Activated CD8-positive, alpha-beta T cell treated with anti-CD3 and anti-CD28 coated beads, Interleukin-2, amount 10 ng/mL, durations not matched to agents 7 days and 5 days (primary cell): ENCODE measurements at regions of chr18 and their contacts with region 1.

Region 1: GRCh38 chr18:3665780-3666525 is 216.0 kb downstream of the TGIF1 start:
- DNase-seq: peak; percentile 79
- ATAC-seq: peak; percentile 83
- H3K4me3 Mint-ChIP-seq: peak overlapping the region; percentile 37
- H3K27ac Mint-ChIP-seq: no peak overlapping the region
- H3K4me1 Mint-ChIP-seq: peaks cover 27% of the 10 kb centered on the region
- H3K27me3 Mint-ChIP-seq: peaks cover 8% of the 10 kb centered on the region

Region 2: GRCh38 chr18:3297025-3297984 is 368.6 kb before region 1 on chr18:
- CTCF ChIA-PET with region 1: interaction called, 81 read pairs
- POLR2A ChIA-PET with region 1: interaction called, 3 read pairs
- DNase-seq: peak; percentile 97
- ATAC-seq: peak; percentile 98
- H3K4me3 Mint-ChIP-seq: peak overlapping the region; percentile 89
- H3K27ac Mint-ChIP-seq: peak overlapping the region; percentile 81
- H3K4me1 Mint-ChIP-seq: peaks cover 7% of the 10 kb centered on the region
- H3K27me3 Mint-ChIP-seq: peaks cover 28% of the 10 kb centered on the region

Region 3: DNA sequence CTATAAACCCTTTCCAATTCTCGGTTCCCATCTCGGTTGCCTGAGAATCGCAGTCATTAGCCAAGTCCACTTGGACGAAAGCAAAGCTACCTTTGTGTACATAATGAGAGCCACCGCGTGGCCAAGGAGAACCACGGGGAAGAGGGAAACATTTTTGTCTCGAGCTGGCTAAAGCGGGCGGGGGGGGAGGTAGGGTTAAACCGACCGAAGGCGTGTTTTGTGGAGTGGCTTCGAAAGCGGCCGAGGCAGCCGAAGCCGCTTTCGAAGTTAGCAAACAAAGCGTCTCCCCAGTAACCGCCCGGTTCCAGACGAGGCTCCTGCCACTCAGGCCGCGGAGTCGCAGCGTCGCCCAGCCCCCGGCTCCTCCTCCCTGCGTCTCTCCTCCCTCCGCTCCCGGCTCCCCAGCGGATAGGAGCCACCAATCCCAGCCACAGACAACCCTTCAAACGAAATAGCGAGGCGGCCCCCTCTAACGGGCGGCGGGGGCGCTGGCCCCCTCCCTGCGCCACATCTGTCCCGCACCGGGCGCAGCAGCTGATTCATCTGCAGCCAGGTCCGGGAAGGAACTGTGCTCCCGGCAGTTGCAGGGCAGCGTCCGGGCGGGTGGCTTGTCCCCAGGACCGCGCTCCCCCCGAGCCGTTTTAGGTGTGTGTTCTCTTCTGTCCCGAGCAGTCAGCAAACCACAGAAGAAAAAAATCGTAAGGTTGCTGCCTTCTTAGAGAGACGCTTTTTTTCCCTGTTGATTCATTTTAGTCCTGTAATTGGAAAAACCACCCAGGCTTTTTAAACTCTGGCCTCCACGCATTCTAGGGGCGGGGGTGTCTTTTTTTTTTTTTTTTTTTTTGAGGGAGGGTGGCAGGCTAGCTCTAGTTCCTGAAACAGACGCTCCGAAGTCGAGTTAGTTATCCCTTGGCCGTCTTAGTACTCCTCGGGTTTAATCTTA is 217.8 kb before region 1 on chr18:
- CTCF ChIA-PET with region 1: interaction called, 126 read pairs
- POLR2A ChIA-PET with region 1: interaction called, 7 read pairs
- DNase-seq: peak; percentile 90
- ATAC-seq: peak; percentile 72
- H3K4me3 Mint-ChIP-seq: peak overlapping the region; percentile 95
- H3K27ac Mint-ChIP-seq: peak overlapping the region; percentile 93
- H3K4me1 Mint-ChIP-seq: peaks cover 25% of the 10 kb centered on the region
- H3K27me3 Mint-ChIP-seq: peaks cover under 1% of the 10 kb centered on the region

Region 4: GRCh38 chr18:3593904-3594661 is 71.9 kb before region 1 on chr18:
- CTCF ChIA-PET with region 1: interaction called, 124 read pairs
- POLR2A ChIA-PET with region 1: interaction called, 16 read pairs
- DNase-seq: peak; percentile 92
- ATAC-seq: peak; percentile 92
- H3K4me3 Mint-ChIP-seq: peak overlapping the region; percentile 93
- H3K27ac Mint-ChIP-seq: peak overlapping the region; percentile 98
- H3K4me1 Mint-ChIP-seq: peaks cover 54% of the 10 kb centered on the region
- H3K27me3 Mint-ChIP-seq: no peaks in the 10 kb centered on the region

Region 5: GRCh38 chr18:3631887-3632286 is 34.1 kb before region 1 on chr18:
- CTCF ChIA-PET with region 1: interaction called, 17 read pairs
- POLR2A ChIA-PET with region 1: no interaction called
- DNase-seq: no peak
- ATAC-seq: no peak
- H3K4me3 Mint-ChIP-seq: no peak overlapping the region
- H3K27ac Mint-ChIP-seq: no peak overlapping the region
- H3K4me1 Mint-ChIP-seq: peaks cover 4% of the 10 kb centered on the region
- H3K27me3 Mint-ChIP-seq: no peaks in the 10 kb centered on the region

Region 6: DNA sequence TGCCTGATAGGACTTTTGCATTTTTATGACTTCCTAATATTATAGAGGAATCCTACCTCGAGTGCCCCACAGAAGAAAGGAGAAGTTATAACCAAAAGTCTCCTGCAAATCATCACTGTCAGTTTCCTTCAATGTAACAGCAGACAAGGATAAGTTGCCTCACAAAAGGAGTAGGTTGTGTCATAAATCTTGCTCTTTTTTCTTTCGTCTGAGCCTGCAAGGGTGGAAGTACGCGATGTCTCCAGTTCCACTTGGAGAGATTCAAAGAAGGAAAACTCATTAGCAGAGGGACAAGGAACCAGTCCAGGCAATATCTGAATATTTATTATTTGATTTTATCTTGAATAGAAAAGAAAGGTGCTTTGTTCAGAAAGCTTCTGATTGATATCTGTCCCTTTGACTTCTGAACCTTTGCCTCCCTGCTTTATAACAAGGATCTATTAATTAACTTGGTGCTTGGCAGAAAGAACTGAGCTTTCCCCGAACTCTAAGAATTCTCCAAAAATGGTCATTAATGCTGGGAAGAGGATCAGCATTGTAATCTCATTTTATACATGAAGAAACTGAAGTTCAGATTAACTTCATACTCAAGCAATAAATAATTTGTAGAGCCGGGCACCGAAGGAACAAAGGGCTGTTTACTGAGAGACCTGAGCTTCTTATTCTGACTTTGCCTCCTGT is 56.5 kb after region 1 on chr18:
- CTCF ChIA-PET with region 1: no interaction called
- POLR2A ChIA-PET with region 1: no interaction called
- DNase-seq: no peak
- ATAC-seq: no peak
- H3K4me3 Mint-ChIP-seq: no peak overlapping the region
- H3K27ac Mint-ChIP-seq: no peak overlapping the region
- H3K4me1 Mint-ChIP-seq: no peaks in the 10 kb centered on the region
- H3K27me3 Mint-ChIP-seq: peaks cover 9% of the 10 kb centered on the region

Region 7: GRCh38 chr18:3966985-3967856 is 301.3 kb after region 1 on chr18:
- CTCF ChIA-PET with region 1: no interaction called
- POLR2A ChIA-PET with region 1: no interaction called
- DNase-seq: no peak
- ATAC-seq: no peak
- H3K4me3 Mint-ChIP-seq: no peak overlapping the region
- H3K27ac Mint-ChIP-seq: no peak overlapping the region
- H3K4me1 Mint-ChIP-seq: no peaks in the 10 kb centered on the region
- H3K27me3 Mint-ChIP-seq: peaks cover 9% of the 10 kb centered on the region